Dorsolateral prefrontal cortex (tissue), 120 donors: ENCODE measurements at regions of chr6 and their contacts with region 1.

Region 1: DNA sequence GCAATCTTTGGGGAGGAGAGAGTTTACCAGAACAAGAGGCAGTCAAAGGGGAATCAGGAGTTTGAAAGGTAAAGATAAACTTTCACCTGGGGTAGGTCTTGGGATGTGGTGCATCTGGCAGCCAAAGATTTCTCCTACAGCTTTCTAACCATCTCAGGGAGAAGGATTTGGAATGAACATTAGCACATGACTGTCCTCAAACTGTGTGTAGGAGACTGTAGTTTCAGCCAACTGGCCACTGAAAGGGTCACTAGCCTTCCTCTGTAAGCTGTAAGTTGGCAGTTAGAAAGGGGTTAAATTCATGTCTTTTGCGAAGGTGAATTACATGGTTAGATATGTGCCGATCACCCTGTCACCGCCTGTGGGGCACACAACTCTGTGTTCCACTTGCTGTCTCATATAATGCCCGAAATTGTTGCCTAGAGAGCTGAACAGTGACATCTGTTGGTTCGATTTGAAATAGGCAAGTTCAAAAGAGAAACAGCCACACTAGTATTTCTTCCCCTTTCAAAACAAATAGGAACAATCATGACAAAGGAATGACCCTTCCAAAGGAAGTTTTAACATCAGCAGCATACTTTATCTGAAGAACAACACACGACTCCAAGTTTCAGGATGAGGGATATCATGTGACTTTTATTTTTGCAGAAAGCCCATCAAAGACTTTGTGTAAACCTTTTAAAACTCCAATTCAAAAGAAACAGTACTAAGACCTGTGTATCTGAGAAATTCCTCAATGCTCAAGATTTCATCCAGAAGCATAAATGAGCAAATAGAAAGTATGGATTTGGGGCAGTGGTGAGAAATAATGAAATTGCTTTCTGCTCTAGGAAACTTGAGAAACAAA is 1.1 kb upstream of the OPN5 start:
- DNase-seq: peak in 3 of 10 donors; percentile 9 to 28 (median 24)
- H3K4me3 ChIP-seq: peak overlapping the region in 10 of 59 donors; percentile 3 to 45 (median 21)
- H3K27ac ChIP-seq: peak overlapping the region in 1 of 59 donors; percentile 34
- H3K27me3 ChIP-seq: peaks cover 0 to 4% (median 0%) of the 10 kb centered on the region in 45 donors
- CTCF ChIP-seq: peak; percentile 5 to 85 (median 70)

Region 2: GRCh38 chr6:47376930-47377329 is 403.8 kb before region 1 on chr6:
- intact Hi-C with region 1: no loop called
- DNase-seq: peak in 1 of 10 donors; percentile 78
- H3K4me3 ChIP-seq: no peak overlapping the region
- H3K27ac ChIP-seq: peak overlapping the region in 1 of 59 donors; percentile 76
- H3K27me3 ChIP-seq: peaks cover 0 to 2% (median 0%) of the 10 kb centered on the region in 45 donors
- CTCF ChIP-seq: no peak

Region 3: DNA sequence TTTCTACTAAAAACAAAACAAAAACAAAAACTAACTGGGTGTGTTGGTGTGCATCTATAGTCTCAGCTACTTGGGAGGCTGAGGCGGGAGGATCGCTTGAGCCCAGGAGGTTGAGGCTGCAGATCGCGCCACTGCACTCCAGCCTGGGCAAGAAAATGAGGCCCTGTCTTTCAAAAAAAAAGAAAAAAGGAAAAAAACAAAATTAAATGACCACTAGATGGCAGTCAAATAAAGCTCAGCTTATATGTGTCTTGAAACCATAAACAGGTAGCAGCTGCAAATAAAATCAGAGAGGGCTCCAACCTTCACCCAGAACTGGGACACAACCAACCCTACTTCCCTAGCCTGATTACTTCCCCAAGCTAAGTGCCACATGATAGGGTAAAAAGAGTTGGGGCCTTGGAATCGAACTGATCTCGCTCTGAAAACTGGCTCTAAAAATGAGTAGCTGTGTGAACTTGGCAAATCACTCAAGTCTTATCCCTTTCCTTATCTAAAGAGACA is 149.4 kb before region 1 on chr6:
- intact Hi-C with region 1: loop called (anchors 1 to 5 kb)
- DNase-seq: no peak
- H3K4me3 ChIP-seq: no peak overlapping the region
- H3K27ac ChIP-seq: peak overlapping the region in 3 of 59 donors; percentile 10 to 40 (median 38)
- H3K27me3 ChIP-seq: no peaks in the 10 kb centered on the region
- CTCF ChIP-seq: peak; percentile 48 to 85 (median 68)